Activated CD4-positive, alpha-beta T cell treated with anti-CD3 and anti-CD28 coated beads, Interleukin-2, amount 10 ng/mL, durations not matched to agents 7 days and 5 days (primary cell): ENCODE measurements at regions of chr15 and their contacts with region 1.

Region 1: DNA sequence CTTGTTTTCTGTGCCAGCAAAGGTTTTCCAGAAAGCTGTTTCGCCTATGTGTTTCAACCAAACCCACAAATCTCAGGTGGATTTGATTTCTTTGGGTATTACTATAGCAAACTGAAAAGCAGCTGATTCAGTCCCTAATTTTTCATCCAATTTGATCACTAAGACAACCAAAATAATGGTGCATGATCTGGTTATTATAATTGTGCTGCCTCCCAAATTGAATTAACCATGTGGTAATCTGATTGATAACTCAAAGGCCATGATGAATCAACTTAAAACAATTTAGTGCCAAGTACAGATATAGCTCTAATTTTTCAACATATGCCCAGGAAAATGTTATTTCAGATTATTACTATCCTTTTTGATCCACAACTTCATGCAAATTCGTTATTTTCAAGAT is 30.6 kb downstream of the PRTG start:
- DNase-seq: no peak
- H3K4me3 Mint-ChIP-seq: no peak overlapping the region
- H3K27ac Mint-ChIP-seq: no peak overlapping the region
- H3K4me1 Mint-ChIP-seq: peaks cover 2% of the 10 kb centered on the region
- H3K27me3 Mint-ChIP-seq: peaks cover 7% of the 10 kb centered on the region

Region 2: DNA sequence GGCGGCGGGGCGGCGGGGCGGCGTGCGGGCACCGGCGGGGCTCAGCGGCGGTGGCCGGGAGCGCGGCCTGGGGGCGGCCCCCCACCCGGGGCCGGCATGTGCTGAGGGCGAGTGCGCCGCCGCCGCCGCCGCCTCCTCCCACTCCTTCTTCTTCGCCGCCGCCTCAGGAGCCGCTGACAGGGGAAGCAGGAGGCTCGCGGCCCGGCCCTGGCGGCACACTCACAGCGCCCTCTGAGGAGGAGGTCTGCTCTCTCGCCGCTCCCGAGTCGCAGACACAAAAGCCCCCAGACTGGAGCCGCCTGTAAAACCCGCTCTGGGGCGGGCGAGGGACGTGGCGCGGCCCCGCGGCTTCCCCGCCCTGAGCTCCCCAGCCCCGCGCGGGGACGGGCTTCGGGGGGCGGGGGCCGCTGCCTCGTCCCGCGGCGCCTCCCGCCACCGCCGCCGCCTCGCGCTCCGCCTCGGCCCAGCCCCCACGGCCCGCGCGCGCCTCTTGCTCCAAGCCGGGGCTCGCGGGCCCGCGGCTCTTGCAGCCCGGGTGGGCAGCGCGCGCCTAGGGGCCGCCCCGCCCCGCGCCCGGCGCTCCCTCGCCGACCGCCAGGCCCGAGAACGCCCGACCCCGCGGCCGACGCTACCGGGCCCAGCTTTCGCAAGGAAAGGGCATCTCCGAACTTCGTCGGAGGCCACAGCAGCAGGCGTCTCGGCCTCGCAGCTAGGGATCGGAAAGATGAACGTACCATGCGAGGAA is 124.1 kb before region 1 on chr15 and contains the start of gene PYGO1:
- CTCF ChIA-PET with region 1: no interaction called
- POLR2A ChIA-PET with region 1: no interaction called
- DNase-seq: peak; percentile 22
- H3K4me3 Mint-ChIP-seq: peak within 1 kb of the TSS; percentile 51
- H3K27ac Mint-ChIP-seq: no peak within 1 kb of the TSS
- H3K4me1 Mint-ChIP-seq: peaks cover 3% of the 10 kb centered on the region
- H3K27me3 Mint-ChIP-seq: peaks cover 42% of the 10 kb centered on the region
- total RNA-seq, gene PYGO1: 0.06 TPM in 1 of 2 experiments, not detected in the other

Region 3: DNA sequence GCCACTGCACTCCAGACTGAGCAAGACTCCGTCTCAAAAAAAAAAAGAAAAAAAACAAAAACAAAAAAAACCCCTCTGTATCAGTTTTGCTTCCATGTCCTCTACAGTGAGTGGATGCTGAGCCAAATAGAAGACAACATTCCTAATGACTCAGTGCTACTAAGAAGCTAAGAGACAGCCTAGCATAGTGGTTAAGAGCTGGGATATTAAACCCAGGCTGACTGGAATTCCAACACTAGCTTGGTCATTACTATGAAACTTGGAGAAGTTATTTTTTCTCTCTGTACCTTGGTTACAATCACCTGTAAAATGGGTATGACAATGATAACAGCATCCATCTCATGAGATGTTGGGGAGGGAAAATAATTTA is 63.3 kb before region 1 on chr15:
- CTCF ChIA-PET with region 1: no interaction called
- POLR2A ChIA-PET with region 1: interaction called, 16 read pairs
- DNase-seq: no peak
- H3K4me3 Mint-ChIP-seq: no peak overlapping the region
- H3K27ac Mint-ChIP-seq: no peak overlapping the region
- H3K4me1 Mint-ChIP-seq: no peaks in the 10 kb centered on the region
- H3K27me3 Mint-ChIP-seq: peaks cover 3% of the 10 kb centered on the region

Region 4: DNA sequence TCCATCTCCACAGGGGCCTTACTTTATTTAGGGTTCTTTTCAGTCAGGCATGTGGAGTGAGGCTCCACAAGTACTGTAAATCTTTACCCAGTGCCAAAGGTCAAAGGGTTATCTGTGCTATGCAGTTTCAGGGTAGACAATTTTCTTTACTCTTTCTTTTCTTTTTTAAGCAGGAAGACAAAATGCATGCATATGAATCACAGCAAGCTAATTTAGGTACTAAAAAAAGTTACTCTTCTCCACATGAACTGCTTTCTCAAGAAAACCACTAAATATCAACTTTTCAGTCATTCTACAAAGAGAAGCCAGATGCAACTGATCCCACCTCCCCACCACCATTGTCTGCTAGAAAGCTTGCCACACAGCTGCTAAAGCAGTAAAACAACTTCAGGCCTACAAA is 50.9 kb before region 1 on chr15:
- CTCF ChIA-PET with region 1: no interaction called
- POLR2A ChIA-PET with region 1: no interaction called
- DNase-seq: no peak
- H3K4me3 Mint-ChIP-seq: no peak overlapping the region
- H3K27ac Mint-ChIP-seq: no peak overlapping the region
- H3K4me1 Mint-ChIP-seq: peaks cover 6% of the 10 kb centered on the region
- H3K27me3 Mint-ChIP-seq: peaks cover 2% of the 10 kb centered on the region